Right cardiac atrium (tissue), 5 donors: ENCODE measurements at regions of chr17 and their contacts with region 1.

Region 1: GRCh38 chr17:65137021-65137991 is at the start of gene RGS9:
- DNase-seq: peak; percentile 89 to 96 (median 95)
- ATAC-seq: peak; percentile 97 to 98
- H3K4me3 ChIP-seq: peak within 1 kb of the TSS; percentile 36
- H3K27ac ChIP-seq: no peak within 1 kb of the TSS
- H3K4me1 ChIP-seq: no peaks in the 10 kb centered on the region
- H3K27me3 ChIP-seq: no peaks in the 10 kb centered on the region
- total RNA-seq, gene RGS9: 4.8 to 15.1 (median 8.3) TPM

Region 2: GRCh38 chr17:65198653-65199382 is 61.5 kb after region 1 on chr17:
- intact Hi-C with region 1: loop called in 1 of 4 experiments (anchors 5 kb)
- DNase-seq: no peak
- ATAC-seq: peak; percentile 47 to 52
- H3K4me3 ChIP-seq: no peak overlapping the region
- H3K27ac ChIP-seq: no peak overlapping the region
- H3K4me1 ChIP-seq: no peaks in the 10 kb centered on the region
- H3K27me3 ChIP-seq: no peaks in the 10 kb centered on the region